IMR-90 (cell line): ENCODE measurements at regions of chr1 and their contacts with region 1.

Region 1: GRCh38 chr1:46077644-46078043 is 54.8 kb downstream of the PIK3R3 start:
- DNase-seq: no peak
- ATAC-seq: no peak
- H3K4me3 ChIP-seq: no peak overlapping the region
- H3K27ac ChIP-seq: no peak overlapping the region
- H3K4me1 ChIP-seq: no peaks in the 10 kb centered on the region
- H3K27me3 ChIP-seq: no peaks in the 10 kb centered on the region
- CTCF ChIP-seq: no peak
- POLR2A ChIP-seq: no peak
- RAD21 ChIP-seq: no peak

Region 2: DNA sequence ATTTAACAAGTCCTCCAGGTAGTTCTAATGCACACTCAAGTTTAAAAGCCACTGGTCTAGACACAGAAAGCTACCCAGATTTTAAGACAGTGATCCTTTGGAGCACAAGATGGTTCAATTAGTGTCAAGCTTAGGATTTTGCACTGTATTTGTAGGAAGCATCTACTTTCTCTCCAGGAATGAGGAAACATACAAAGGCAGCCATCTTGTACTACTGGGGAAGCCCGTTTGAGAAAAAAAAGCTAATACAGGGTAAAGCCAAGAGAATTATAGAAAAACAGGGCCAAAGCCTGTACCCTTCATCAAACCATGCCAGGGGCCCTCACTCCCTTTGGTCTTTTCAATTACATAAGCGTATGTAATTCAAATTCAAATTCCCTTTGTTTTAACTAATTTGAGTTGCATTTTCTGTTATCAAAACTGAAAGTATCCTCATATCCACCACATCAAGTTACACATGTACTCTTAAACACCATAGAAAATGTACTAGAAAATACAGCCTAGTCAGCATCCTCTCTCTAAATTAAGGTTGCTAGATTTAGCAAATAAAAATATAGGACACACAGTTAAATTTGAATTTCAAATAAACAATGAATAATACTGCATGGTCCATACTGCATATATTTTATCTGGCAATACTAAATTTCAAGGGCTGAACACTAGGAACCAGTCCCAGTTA is 37.4 kb after region 1 on chr1:
- CTCF ChIA-PET with region 1: no interaction called
- POLR2A ChIA-PET with region 1: no interaction called
- dilution Hi-C with region 1: no loop called
- in situ Hi-C with region 1: no loop called
- intact Hi-C with region 1: loop called (anchors 5 kb)
- DNase-seq: no peak
- ATAC-seq: peak; percentile 35; the same call in 1 of the 2 replicates
- H3K4me3 ChIP-seq: peak overlapping the region; percentile 23; the same call in 1 of the 2 replicates
- H3K27ac ChIP-seq: no peak overlapping the region
- H3K4me1 ChIP-seq: no peaks in the 10 kb centered on the region
- H3K27me3 ChIP-seq: no peaks in the 10 kb centered on the region
- CTCF ChIP-seq: no peak
- POLR2A ChIP-seq: no peak
- RAD21 ChIP-seq: no peak